ENCODE measurements at regions of chr1 and their contacts with region 1.

Region 1: DNA sequence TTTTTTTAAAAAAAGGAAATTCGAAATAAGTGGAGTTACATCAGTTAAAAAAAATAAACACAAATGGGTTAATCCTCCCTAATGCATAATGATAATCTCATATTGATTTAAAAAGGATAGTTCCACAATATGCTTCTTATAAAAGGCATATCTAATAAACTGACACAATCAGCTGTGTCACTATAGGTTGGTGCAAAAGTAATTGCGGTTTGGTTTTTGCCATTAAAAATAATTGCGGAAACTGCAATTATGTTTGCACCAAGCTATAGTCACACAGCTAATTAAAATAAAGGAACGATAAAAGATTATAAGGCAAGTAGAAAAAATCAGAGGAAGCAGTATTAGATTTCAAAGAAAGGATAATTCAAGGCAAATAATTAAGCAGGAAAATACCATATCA is 20.9 kb upstream of the IFI44L start:
- DNase-seq: no peak
- ATAC-seq: no peak

Region 2: GRCh38 chr1:78145105-78145580 is 454.2 kb before region 1 on chr1:
- intact Hi-C with region 1: loop called (anchors 5 kb)
- DNase-seq: no peak
- ATAC-seq: peak; percentile 80